ENCODE measurements at regions of chr13 and their contacts with region 1.

Region 1: DNA sequence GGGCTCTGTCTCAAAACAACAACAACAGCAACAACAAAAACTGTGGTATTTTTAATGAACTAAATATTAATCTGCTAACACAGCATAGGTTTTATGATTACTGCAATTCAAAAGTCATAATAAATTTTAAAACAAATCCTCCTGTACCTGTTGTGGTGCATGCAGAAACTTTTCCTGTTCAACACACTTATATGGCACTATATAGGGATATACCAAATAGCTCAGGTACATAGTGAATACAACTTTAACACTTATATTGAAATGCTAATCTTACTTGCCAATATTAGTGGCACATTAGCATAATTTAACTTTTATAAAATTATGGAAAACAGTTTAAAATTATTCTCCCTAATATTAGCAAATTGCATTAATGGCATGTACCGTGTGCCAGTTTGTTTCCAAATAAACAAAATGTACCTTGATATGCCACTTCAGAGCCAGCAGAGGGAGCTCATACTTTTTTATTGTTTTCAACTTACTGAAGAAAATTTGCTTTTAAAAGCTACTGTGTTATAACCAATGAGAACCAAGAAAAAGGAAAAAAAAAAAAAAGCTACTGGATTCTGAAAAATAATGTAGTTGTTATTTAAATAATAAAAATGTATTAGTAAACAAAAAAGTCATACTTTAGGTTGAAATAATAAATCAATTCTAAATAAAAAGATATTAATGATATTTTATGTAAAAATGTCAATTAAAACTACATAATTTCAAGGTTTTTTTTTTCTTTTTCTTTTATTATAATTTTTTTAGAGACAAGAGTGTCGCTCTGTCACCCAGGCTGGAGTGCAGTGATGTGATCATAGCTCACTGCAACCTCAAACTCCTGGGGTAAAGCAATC is 18.0 kb upstream of the RBM26 start:
- DNase-seq: peak; percentile 56 to 76 (median 73)
- H3K4me3 ChIP-seq: no peak overlapping the region
- H3K27ac ChIP-seq: no peak overlapping the region
- H3K4me1 ChIP-seq: no peaks in the 10 kb centered on the region
- H3K27me3 ChIP-seq: no peaks in the 10 kb centered on the region

Region 2: GRCh38 chr13:79360095-79360494 is 63.9 kb before region 1 on chr13:
- CTCF ChIA-PET with region 1: no interaction called
- POLR2A ChIA-PET with region 1: no interaction called
- DNase-seq: no peak
- H3K4me3 ChIP-seq: no peak overlapping the region
- H3K27ac ChIP-seq: no peak overlapping the region
- H3K4me1 ChIP-seq: no peaks in the 10 kb centered on the region
- H3K27me3 ChIP-seq: no peaks in the 10 kb centered on the region

Region 3: GRCh38 chr13:79408352-79408751 is 15.7 kb before region 1 on chr13:
- CTCF ChIA-PET with region 1: interaction called, 17 read pairs
- POLR2A ChIA-PET with region 1: no interaction called
- DNase-seq: no peak
- H3K4me3 ChIP-seq: no peak overlapping the region
- H3K27ac ChIP-seq: no peak overlapping the region
- H3K4me1 ChIP-seq: peaks cover 16 to 28% (median 22%) of the 10 kb centered on the region in 4 experiments
- H3K27me3 ChIP-seq: no peaks in the 10 kb centered on the region

Region 4: GRCh38 chr13:79459906-79460305 is 35.9 kb after region 1 on chr13:
- CTCF ChIA-PET with region 1: interaction called, 10 read pairs
- POLR2A ChIA-PET with region 1: no interaction called
- DNase-seq: no peak
- H3K4me3 ChIP-seq: no peak overlapping the region
- H3K27ac ChIP-seq: no peak overlapping the region
- H3K4me1 ChIP-seq: no peaks in the 10 kb centered on the region
- H3K27me3 ChIP-seq: peaks cover 0 to 4% (median 0%) of the 10 kb centered on the region in 5 experiments

Region 5: DNA sequence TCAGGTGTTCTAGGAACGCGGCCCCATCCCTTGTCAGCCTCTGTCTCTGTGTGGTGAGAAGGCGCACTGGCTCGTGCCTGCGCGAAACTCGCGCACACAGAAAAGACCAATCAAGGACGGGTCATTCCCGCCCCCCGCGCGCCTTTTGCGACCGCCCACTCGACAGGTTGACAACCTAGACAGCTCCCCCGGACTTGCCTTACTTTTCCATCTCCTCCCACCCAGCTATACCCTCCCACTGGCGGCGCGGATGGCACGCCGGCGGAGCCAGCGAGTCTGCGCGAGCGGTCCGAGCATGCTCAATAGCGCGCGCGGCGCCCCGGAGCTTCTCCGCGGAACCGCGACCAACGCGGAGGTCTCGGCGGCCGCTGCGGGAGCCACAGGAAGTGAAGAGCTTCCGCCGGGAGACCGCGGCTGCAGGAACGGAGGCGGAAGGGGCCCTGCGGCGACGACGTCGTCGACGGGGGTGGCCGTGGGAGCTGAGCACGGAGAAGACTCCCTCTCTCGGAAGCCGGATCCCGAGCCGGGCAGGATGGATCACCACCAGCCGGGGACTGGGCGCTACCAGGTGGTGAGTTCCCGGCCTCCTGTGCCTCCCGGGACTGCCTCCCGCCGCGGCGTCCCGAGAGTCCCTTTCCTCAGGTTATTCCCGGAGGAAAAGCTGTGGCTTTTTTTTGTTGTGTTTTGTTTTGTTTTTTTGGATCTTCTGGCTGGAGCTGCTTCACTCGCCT is 57.1 kb after region 1 on chr13 and contains the start of gene NDFIP2:
- CTCF ChIA-PET with region 1: interaction called, 11 read pairs
- POLR2A ChIA-PET with region 1: no interaction called
- DNase-seq: peak; percentile 80 to 89 (median 87)
- H3K4me3 ChIP-seq: peak within 1 kb of the TSS; percentile 40 to 85 (median 70)
- H3K27ac ChIP-seq: peak within 1 kb of the TSS in 1 of 2 experiments; percentile 43
- H3K4me1 ChIP-seq: peaks cover 12 to 24% (median 18%) of the 10 kb centered on the region in 4 experiments
- H3K27me3 ChIP-seq: peaks cover 13 to 78% (median 40%) of the 10 kb centered on the region in 5 experiments

Region 6: GRCh38 chr13:79528759-79529191 is 104.8 kb after region 1 on chr13:
- CTCF ChIA-PET with region 1: interaction called, 13 read pairs
- POLR2A ChIA-PET with region 1: no interaction called
- DNase-seq: no peak
- H3K4me3 ChIP-seq: no peak overlapping the region
- H3K27ac ChIP-seq: no peak overlapping the region
- H3K4me1 ChIP-seq: peaks cover 3 to 12% (median 7%) of the 10 kb centered on the region in 4 experiments
- H3K27me3 ChIP-seq: peaks cover 0 to 3% (median 0%) of the 10 kb centered on the region in 5 experiments

Region 7: DNA sequence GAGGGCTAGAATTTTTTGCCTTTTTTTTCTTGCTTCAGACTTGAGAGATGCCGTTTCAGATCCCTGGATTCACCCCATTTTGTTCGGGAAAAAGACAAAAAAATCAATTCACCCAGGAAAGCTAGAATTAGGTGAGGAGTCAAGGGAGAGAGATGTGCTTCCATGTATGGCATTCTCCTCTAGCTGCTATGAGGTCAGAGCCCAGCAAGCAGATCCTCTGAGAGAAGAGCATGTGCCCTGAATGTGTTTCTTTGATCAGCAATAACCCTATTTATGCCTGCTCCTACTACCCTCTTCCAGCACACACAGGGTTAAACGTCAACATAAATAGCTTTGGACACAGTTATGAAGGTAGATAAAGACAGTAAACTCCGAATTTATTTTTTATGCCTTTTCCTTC is 110.6 kb after region 1 on chr13:
- CTCF ChIA-PET with region 1: interaction called, 170 read pairs
- POLR2A ChIA-PET with region 1: no interaction called
- DNase-seq: no peak
- H3K4me3 ChIP-seq: no peak overlapping the region
- H3K27ac ChIP-seq: no peak overlapping the region
- H3K4me1 ChIP-seq: peaks cover 0 to 2% (median 0%) of the 10 kb centered on the region in 4 experiments
- H3K27me3 ChIP-seq: peaks cover 0 to 3% (median 2%) of the 10 kb centered on the region in 5 experiments

Region 8: GRCh38 chr13:79541426-79542049 is 117.5 kb after region 1 on chr13:
- CTCF ChIA-PET with region 1: interaction called, 170 read pairs
- POLR2A ChIA-PET with region 1: no interaction called
- DNase-seq: peak; percentile 76 to 86 (median 79)
- H3K4me3 ChIP-seq: no peak overlapping the region
- H3K27ac ChIP-seq: no peak overlapping the region
- H3K4me1 ChIP-seq: no peaks in the 10 kb centered on the region
- H3K27me3 ChIP-seq: no peaks in the 10 kb centered on the region